Activated CD4-positive, alpha-beta memory T cell treated with anti-CD3 and anti-CD28 coated beads for 36 hours (primary cell): ENCODE measurements at regions of chr1 and their contacts with region 1.

Region 1: DNA sequence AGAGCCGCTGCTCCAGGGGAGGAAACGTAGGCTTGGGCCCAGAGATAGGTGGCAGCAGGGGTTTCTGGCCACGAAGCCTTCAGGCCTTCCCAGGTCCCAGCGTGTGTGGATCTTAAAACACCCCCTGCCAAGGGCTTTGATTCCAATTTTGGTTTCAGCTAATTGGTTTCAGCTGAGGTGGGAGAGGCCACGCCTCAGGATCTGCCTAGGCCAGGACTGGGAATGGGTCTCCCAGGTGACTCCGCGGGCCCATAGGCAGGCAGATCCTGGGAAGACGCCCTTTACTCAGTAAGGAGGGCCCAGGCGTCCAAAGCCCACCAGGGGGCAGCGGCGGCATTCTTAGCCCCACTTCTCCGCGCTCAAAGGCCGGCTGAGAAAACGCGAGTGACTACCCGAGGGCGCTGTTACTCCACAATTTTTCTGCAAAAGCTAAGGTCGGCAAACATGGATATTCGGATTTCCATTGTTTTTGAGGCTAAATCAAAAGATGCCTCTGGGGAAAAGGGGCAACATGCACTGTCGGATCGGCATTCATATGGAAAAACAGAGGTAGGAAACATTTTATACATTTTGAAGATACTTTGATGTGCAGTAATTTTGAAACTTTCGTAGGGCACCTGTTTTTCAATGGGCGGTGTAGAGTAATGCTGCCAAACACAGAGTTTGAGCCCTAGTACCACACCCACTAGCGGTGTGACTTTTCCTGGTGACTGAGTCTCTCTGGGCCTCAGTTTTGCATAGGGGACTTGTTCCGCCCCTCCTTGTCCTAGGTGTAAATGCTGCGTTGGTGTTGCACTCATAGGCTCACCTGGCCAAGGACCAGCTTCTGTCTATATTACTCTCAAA is 31.8 kb upstream of the BCL10 start:
- DNase-seq: peak; percentile 79
- H3K4me3 Mint-ChIP-seq: no peak overlapping the region
- H3K27ac Mint-ChIP-seq: no peak overlapping the region
- H3K4me1 Mint-ChIP-seq: peaks cover 8% of the 10 kb centered on the region
- H3K27me3 Mint-ChIP-seq: peaks cover 43% of the 10 kb centered on the region

Region 2: GRCh38 chr1:85102474-85102873 is 205.7 kb before region 1 on chr1:
- CTCF ChIA-PET with region 1: no interaction called
- POLR2A ChIA-PET with region 1: no interaction called
- intact Hi-C with region 1: no loop called
- DNase-seq: no peak
- H3K4me3 Mint-ChIP-seq: no peak overlapping the region
- H3K27ac Mint-ChIP-seq: no peak overlapping the region
- H3K4me1 Mint-ChIP-seq: no peaks in the 10 kb centered on the region
- H3K27me3 Mint-ChIP-seq: peaks cover 5% of the 10 kb centered on the region

Region 3: GRCh38 chr1:85321237-85321964 is 13.2 kb after region 1 on chr1:
- CTCF ChIA-PET with region 1: interaction called, 10 read pairs
- POLR2A ChIA-PET with region 1: no interaction called
- intact Hi-C with region 1: no loop called
- DNase-seq: peak; percentile 72
- H3K4me3 Mint-ChIP-seq: no peak overlapping the region
- H3K27ac Mint-ChIP-seq: no peak overlapping the region
- H3K4me1 Mint-ChIP-seq: peaks cover 9% of the 10 kb centered on the region
- H3K27me3 Mint-ChIP-seq: peaks cover 30% of the 10 kb centered on the region

Region 4: GRCh38 chr1:85576642-85577418 is 268.6 kb after region 1 on chr1:
- CTCF ChIA-PET with region 1: interaction called, 11 read pairs
- POLR2A ChIA-PET with region 1: no interaction called
- intact Hi-C with region 1: loop called (anchors 1 kb)
- DNase-seq: peak; percentile 72
- H3K4me3 Mint-ChIP-seq: peak overlapping the region; percentile 60
- H3K27ac Mint-ChIP-seq: no peak overlapping the region
- H3K4me1 Mint-ChIP-seq: peaks cover 33% of the 10 kb centered on the region
- H3K27me3 Mint-ChIP-seq: peaks cover 66% of the 10 kb centered on the region

Region 5: DNA sequence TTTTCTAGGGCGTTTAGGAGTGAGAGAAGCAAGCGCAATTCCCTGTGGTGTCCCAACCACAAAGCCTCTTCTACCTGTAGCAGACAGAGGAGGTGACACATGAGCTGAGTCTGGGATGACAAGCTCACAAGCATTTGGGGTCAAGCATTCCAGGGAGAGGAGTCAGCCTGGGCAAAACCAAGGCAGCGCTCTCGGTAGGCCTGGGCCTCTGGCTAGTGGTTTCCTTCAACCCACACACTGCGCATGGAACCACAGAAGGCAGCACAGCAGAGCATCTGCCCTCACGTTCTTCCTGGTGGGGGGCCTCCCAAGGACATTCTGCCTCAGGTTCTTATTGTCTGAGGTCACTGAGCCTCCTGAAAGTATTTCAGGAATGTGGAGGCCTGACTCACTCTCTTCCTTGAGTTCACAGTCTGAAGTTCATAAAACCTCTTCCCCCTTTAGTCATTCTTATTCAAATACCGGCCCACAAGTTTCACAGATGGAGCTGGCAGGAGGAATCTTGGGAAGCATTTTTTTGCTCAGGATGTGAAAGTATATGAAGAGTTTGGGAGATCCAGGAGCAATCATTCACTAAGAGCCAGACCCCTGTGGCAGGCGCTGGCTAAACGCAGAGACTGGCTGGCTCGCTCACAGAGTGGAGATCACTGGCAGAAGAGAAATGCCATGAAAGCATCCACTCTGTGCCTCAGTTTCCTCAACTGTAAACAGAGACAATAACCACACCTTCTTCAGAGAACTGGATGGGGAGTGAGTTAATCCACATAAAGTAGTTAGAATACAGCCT is 299.1 kb after region 1 on chr1:
- CTCF ChIA-PET with region 1: no interaction called
- POLR2A ChIA-PET with region 1: no interaction called
- intact Hi-C with region 1: no loop called
- DNase-seq: no peak
- H3K4me3 Mint-ChIP-seq: no peak overlapping the region
- H3K27ac Mint-ChIP-seq: no peak overlapping the region
- H3K4me1 Mint-ChIP-seq: no peaks in the 10 kb centered on the region
- H3K27me3 Mint-ChIP-seq: no peaks in the 10 kb centered on the region

Region 6: DNA sequence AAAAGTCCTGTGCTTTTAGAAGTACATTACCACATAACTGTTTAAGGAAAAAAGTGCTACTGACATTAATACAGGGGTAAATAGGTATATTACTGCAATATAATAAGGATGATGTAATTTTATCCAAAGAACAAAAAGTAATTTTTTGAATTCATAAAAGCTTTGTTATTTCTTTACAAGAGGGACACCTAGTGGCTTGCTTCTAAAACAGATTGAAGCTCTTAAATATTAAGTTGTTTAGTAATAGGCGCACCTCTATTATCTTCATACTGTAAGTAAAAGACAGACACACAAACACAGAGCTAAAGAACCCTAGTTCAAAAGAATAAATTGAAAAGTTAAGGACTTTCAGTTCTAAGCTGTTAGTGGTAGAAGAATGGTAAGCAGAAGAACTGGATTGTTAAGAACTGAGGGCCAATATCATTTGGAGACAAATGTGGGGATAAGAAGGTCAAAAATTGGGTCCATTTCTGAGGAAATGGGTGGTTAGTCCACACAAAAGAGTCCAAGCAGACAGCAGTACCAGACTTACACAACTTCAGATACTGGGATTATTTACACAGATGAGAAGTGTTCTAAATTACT is 384.6 kb after region 1 on chr1:
- CTCF ChIA-PET with region 1: interaction called, 5 read pairs
- POLR2A ChIA-PET with region 1: no interaction called
- intact Hi-C with region 1: loop called (anchors 2 kb)
- DNase-seq: no peak
- H3K4me3 Mint-ChIP-seq: no peak overlapping the region
- H3K27ac Mint-ChIP-seq: no peak overlapping the region
- H3K4me1 Mint-ChIP-seq: peaks cover 4% of the 10 kb centered on the region
- H3K27me3 Mint-ChIP-seq: no peaks in the 10 kb centered on the region

Region 7: GRCh38 chr1:86018283-86018923 is 710.2 kb after region 1 on chr1:
- CTCF ChIA-PET with region 1: interaction called, 3 read pairs
- POLR2A ChIA-PET with region 1: no interaction called
- intact Hi-C with region 1: loop called (anchors 1 kb)
- DNase-seq: no peak
- H3K4me3 Mint-ChIP-seq: no peak overlapping the region
- H3K27ac Mint-ChIP-seq: no peak overlapping the region
- H3K4me1 Mint-ChIP-seq: no peaks in the 10 kb centered on the region
- H3K27me3 Mint-ChIP-seq: no peaks in the 10 kb centered on the region